Activated T-helper 2 cell treated with anti-CD3 and anti-CD28 coated beads, Interferon-gamma antibody, Interleukin-2, Interleukin-4, amounts not matched to agents 10 μg/mL and 5 μg/mL and 100 μg/mL, durations not matched to agents 14 hours and 24 hours and 36 hours (primary cell): ENCODE measurements at regions of chr2 and their contacts with region 1.

Region 1: DNA sequence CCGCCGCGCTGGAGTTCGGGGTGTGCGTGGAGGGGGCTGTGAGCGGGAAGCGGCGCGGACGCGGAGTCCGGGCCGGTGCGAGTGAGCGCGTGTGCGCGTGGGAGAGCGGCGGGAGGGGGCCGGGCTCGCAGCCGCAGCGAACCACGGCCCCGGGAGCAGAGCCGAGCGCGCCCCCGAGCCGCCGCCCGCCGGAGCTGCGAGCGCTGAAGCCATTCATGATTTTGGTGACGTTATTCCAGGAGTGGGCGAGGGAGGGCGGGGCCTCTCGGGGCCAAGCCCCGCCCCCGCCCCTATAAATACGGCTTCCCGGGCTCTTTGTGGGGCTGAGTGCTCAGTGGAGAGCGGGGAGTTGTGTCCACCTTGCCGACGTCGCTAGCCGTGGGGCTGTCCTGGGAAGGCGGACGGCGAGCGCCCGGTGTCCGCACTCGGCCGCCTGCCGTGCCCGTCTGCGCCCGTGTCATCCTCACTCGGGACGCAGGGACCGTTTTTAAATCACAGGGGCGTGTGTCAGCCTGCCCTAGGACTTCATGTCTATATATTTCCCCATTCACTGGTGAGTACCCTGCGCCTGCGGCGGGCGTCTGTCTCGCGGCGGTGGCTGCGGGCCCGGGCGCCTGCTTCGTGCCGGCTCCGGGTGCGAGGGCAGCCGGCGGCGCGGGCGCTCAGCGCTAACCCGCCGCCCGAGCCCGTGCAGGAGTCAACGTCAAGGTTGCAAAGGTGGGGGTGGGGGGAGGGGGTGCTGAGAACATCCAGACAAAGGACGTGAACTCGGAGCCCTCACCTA is at the start of gene LBH:
- DNase-seq: peak; percentile 70
- H3K4me3 Mint-ChIP-seq: peak within 1 kb of the TSS; percentile 84
- H3K27ac Mint-ChIP-seq: peak within 1 kb of the TSS; percentile 79
- H3K4me1 Mint-ChIP-seq: peaks cover 50% of the 10 kb centered on the region
- H3K27me3 Mint-ChIP-seq: peaks cover 4% of the 10 kb centered on the region
- total RNA-seq, gene LBH: 60.8 and 61.1 TPM in 2 replicates

Region 2: DNA sequence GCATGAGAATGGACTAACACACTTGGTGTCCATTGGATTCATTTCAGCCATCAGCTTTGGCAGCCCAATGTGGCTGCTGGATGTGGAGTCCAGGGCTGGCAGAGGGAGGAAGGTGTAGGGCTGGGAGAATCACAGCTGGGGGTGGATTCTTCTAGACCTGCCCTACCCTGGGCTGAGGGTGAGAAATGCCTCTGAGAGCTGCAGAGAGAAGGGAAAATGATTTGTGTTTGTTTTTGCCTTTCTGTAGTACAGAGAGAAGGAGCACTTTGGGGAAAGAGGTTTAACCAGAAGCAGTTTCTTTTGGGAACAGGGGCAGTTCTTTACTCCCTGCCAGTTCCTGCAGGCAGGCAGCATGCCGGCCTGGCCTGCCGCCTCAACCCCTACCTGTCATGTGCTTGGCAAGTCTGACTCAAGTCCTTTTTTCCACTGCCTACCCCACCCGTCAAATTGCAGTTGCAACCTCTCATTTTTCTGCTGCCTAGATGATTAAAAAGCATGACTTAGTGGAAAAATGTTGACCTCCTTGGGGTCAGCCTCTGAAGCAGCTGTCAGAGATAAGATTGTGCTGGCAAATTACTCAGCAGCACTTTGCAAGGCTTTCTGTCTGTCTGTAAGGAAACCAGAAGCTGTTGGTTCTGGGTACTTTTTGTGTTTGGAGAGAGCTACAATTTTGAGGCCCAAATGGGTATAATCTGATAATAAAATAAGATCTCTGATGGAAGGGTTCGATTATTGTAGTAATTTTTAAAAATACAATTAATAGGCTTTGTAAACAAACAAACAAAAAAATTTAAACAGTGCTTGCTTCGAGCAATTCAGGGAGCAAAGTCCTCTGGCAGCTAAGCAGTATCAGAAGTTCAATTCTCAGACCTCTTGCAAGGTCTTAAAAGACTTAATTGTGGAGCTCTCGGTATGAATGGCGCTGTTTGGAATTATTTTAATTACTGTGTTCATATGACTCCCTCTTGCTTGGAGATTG is 21.6 kb after region 1 on chr2:
- intact Hi-C with region 1: loop called (anchors 1 kb)
- DNase-seq: peak; percentile 51
- H3K4me3 Mint-ChIP-seq: no peak overlapping the region
- H3K27ac Mint-ChIP-seq: peak overlapping the region; percentile 86
- H3K4me1 Mint-ChIP-seq: peaks cover 59% of the 10 kb centered on the region
- H3K27me3 Mint-ChIP-seq: no peaks in the 10 kb centered on the region

Region 3: DNA sequence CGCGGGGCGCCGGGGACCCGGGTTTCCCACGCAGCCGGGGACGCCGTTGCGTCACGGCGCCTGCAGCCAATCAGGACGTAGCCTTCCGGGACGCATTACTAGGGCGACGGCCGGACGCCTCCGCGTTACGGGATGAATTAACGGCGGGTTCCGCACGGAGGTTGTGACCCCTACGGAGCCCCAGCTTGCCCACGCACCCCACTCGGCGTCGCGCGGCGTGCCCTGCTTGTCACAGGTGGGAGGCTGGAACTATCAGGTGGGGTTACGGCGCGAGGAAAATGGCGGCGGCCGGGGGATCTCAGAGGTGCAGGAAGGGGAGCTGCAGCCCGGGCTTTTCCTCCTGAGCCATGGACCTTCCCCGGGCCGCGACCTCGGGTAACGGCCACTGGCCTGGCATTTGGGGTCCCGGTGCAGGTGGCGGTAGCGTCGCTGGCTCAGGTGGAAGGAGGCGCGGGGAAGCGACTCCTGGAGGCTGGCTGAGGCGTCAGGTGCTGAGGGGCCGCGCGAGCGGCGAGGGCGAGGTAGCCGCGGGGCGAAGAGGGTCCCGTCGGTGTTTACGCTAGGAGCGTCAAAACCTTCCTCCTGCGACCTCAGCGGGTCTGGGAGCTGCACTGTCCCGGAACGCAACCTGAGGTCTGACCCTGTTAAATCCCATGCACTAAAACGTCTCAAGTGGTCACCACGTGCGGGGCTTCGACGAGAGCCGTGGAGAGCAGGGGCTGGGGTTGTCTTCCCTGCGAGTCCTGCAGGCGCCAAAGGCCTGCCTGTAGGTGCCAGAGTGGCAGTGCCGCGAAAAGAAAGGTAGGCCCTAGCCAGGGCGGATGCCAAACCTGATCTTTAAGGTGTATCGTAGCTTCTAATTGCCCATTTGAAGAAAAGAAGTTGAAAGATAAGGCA is 216.0 kb after region 1 on chr2 and contains the start of gene LCLAT1:
- intact Hi-C with region 1: loop called (anchors 2 kb)
- DNase-seq: peak; percentile 81
- H3K4me3 Mint-ChIP-seq: peak within 1 kb of the TSS; percentile 94
- H3K27ac Mint-ChIP-seq: peak within 1 kb of the TSS; percentile 97
- H3K4me1 Mint-ChIP-seq: peaks cover 21% of the 10 kb centered on the region
- H3K27me3 Mint-ChIP-seq: no peaks in the 10 kb centered on the region
- total RNA-seq, gene LCLAT1: 24.6 and 28.9 TPM in 2 replicates